ENCODE measurements at regions of chrX and their contacts with region 1.

Region 1: DNA sequence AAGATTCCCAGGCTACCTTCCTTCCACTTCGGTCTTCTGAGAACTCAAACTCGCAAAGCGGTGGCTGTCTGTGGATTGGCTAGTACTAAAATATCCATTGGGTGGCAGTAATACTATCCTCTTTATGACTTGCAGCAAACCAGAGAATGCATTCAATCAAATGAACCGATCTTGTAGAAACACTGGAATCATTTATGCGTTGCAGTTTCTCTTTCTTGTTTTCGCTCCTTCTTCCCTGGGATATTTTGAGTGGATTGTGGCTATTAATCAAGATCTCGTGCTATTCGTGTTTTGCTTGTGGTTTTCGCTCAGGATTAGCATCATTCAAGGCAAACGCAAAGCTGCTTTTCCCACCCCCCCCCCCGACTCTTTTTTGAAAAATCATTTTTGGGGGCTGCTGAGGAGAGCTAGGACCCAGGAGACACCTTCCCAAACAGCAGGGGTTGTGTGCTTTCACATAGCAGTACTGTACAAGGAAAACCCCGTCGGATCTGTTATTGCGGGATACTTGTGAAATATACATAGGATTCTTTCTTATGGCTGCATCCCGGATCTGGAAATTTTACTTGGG is at the start of gene IL1RAPL1:
- DNase-seq: no peak
- ATAC-seq: peak; percentile 84
- total RNA-seq, gene IL1RAPL1: 4.0 TPM

Region 2: DNA sequence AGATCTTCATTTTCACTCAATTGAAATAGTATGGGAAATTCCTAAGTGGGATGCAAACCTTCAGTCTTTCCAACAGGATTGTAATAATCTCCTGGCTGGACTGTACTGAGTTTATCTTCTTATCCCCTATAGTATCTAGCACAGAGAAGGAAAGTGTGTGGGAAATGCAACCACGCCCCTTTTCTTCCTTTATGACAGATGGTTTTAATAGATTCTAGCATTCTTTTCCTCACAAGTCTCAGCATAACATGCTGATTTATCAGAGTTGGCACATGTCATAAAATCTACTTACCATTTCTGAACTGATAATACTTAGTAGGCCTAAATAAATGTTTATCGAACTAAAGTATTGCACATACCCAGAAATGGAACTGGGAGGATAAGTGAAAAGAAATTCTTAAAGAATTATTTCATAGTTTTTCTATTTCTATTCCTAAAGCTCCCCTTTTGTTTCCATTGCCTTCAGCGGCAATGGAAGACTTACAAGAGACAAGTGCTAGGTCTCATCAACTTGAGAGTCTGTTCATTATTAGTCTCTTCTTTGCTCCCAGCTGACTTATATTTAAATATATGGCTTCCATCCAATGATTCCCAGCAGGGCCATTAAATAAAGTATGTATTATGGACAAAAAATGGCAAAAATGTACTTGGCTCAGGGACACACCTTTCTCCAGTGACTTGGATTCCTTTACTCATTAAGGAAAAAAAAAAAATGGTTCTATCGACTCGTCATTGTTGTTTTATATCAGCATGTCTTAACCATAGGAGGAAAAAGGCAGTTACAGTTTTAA is 484.7 kb after region 1 on chrX:
- intact Hi-C with region 1: loop called (anchors 10 kb)
- DNase-seq: no peak
- ATAC-seq: no peak

Region 3: DNA sequence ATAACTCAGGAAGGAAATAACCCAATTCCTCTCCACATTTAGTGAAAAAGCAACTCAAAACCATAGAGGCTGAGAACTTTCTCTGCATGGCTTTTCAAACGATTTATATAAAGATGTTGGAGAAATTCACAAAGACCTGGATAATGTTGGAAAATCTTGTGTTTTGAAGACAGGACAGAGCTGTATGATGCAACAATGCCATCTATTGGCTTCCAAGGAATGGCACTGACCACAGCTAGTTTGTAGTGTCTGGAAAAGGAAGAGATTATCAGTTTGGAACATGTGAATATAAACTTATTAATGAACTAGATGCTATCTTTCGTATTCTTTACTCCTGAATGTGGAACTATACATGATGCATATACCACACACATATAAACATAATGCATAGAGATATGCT is 503.7 kb after region 1 on chrX:
- intact Hi-C with region 1: loop called (anchors 5 kb)
- DNase-seq: no peak
- ATAC-seq: no peak

Measured in Right ventricle myocardium inferior (tissue), 1 donor.